OCI-LY7 (cell line): ENCODE measurements at regions of chr12 and their contacts with region 1.

Region 1: GRCh38 chr12:40152783-40153383 is 47.0 kb upstream of the SLC2A13 start:
- DNase-seq: peak; percentile 77
- H3K4me3 ChIP-seq: no peak overlapping the region
- H3K27ac ChIP-seq: no peak overlapping the region
- H3K4me1 ChIP-seq: peaks cover 16% of the 10 kb centered on the region
- CTCF ChIP-seq: peak; percentile 98

Region 2: DNA sequence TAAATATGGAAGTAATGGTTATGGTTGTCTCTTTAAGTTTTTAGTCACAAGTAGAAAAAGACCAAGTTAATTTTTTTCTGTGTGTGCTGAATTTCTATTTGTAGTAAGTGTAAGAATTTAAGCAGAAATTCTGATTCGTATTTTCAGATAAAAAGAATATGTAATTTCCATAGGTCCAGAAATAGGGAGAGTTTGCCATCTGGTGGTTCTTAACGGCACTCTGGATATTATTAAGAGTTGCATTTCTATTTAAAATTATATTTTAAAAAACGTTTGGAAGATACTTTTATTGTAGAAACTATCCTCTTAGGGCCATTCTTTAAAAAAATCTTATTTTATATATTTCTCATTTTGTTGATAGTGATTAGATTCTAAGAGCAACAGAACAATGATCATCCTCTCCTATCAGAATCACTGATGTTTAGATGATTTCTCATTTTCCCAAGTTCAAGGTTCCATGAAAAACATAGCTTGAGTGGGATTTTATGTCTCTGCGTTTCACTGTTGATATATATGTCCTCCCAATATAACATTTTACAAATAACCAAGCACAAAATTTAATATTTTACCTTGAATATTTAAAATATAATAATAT is 160.2 kb after region 1 on chr12:
- CTCF ChIA-PET with region 1: no interaction called
- POLR2A ChIA-PET with region 1: interaction called, 15 read pairs
- intact Hi-C with region 1: loop called (anchors 1 kb)
- DNase-seq: peak; percentile 54
- H3K4me3 ChIP-seq: no peak overlapping the region
- H3K27ac ChIP-seq: peak overlapping the region; percentile 35
- H3K4me1 ChIP-seq: peaks cover 36% of the 10 kb centered on the region
- CTCF ChIP-seq: peak; percentile 97

Region 3: GRCh38 chr12:40375076-40375475 is 222.2 kb after region 1 on chr12:
- CTCF ChIA-PET with region 1: no interaction called
- POLR2A ChIA-PET with region 1: no interaction called
- intact Hi-C with region 1: loop called (anchors 2 kb)
- DNase-seq: peak; percentile 50
- H3K4me3 ChIP-seq: no peak overlapping the region
- H3K27ac ChIP-seq: no peak overlapping the region
- H3K4me1 ChIP-seq: no peaks in the 10 kb centered on the region
- CTCF ChIP-seq: peak; percentile 75

Region 4: GRCh38 chr12:40405419-40405818 is 252.5 kb after region 1 on chr12:
- CTCF ChIA-PET with region 1: no interaction called
- POLR2A ChIA-PET with region 1: no interaction called
- intact Hi-C with region 1: no loop called
- DNase-seq: no peak
- H3K4me3 ChIP-seq: no peak overlapping the region
- H3K27ac ChIP-seq: no peak overlapping the region
- H3K4me1 ChIP-seq: no peaks in the 10 kb centered on the region
- CTCF ChIP-seq: no peak

Region 5: GRCh38 chr12:40502322-40502721 is 349.4 kb after region 1 on chr12:
- CTCF ChIA-PET with region 1: no interaction called
- POLR2A ChIA-PET with region 1: no interaction called
- intact Hi-C with region 1: no loop called
- DNase-seq: peak; percentile 46
- H3K4me3 ChIP-seq: peak overlapping the region; percentile 8
- H3K27ac ChIP-seq: no peak overlapping the region
- H3K4me1 ChIP-seq: peaks cover 17% of the 10 kb centered on the region
- CTCF ChIP-seq: no peak